SK-N-SH (cell line): ENCODE measurements at regions of chr12 and their contacts with region 1.

Region 1: GRCh38 chr12:49060237-49061156 is at the start of gene KMT2D:
- DNase-seq: peak; percentile 95
- H3K4me3 ChIP-seq: peak within 1 kb of the TSS; percentile 90 to 96
- H3K27ac ChIP-seq: peak within 1 kb of the TSS; percentile 93 to 97
- H3K4me1 ChIP-seq: peaks cover 16 to 37% of the 10 kb centered on the region in 2 experiments; a peak in 3 of 4 replicates
- H3K27me3 ChIP-seq: no peaks in the 10 kb centered on the region
- CTCF ChIP-seq: peak; percentile 44
- EP300 ChIP-seq: no peak
- RAD21 ChIP-seq: no peak
- polyA plus RNA-seq, gene KMT2D: 16.3 and 30.5 TPM in 2 replicates

Region 2: GRCh38 chr12:49049566-49050413 is 10.7 kb before region 1 on chr12:
- CTCF ChIA-PET with region 1: interaction called, 49 read pairs
- POLR2A ChIA-PET with region 1: no interaction called
- DNase-seq: no peak
- H3K4me3 ChIP-seq: no peak overlapping the region
- H3K27ac ChIP-seq: peak overlapping the region in 1 of 2 experiments; percentile 59; a peak in 2 of 4 replicates
- H3K4me1 ChIP-seq: peaks cover 0 to 7% of the 10 kb centered on the region in 2 experiments; a peak in 2 of 4 replicates
- H3K27me3 ChIP-seq: no peaks in the 10 kb centered on the region
- CTCF ChIP-seq: no peak
- EP300 ChIP-seq: no peak
- RAD21 ChIP-seq: no peak

Region 3: GRCh38 chr12:49088190-49088931 is 27.9 kb after region 1 on chr12:
- CTCF ChIA-PET with region 1: interaction called, 300 read pairs
- POLR2A ChIA-PET with region 1: interaction called, 3 read pairs
- DNase-seq: peak; percentile 86
- H3K4me3 ChIP-seq: peak overlapping the region in 1 of 2 experiments; percentile 49; a peak in 2 of 4 replicates
- H3K27ac ChIP-seq: no peak overlapping the region
- H3K4me1 ChIP-seq: peaks cover 0 to 24% of the 10 kb centered on the region in 2 experiments; a peak in 1 of 4 replicates
- H3K27me3 ChIP-seq: no peaks in the 10 kb centered on the region
- CTCF ChIP-seq: peak; percentile 87
- EP300 ChIP-seq: no peak
- RAD21 ChIP-seq: peak; percentile 79

Region 4: DNA sequence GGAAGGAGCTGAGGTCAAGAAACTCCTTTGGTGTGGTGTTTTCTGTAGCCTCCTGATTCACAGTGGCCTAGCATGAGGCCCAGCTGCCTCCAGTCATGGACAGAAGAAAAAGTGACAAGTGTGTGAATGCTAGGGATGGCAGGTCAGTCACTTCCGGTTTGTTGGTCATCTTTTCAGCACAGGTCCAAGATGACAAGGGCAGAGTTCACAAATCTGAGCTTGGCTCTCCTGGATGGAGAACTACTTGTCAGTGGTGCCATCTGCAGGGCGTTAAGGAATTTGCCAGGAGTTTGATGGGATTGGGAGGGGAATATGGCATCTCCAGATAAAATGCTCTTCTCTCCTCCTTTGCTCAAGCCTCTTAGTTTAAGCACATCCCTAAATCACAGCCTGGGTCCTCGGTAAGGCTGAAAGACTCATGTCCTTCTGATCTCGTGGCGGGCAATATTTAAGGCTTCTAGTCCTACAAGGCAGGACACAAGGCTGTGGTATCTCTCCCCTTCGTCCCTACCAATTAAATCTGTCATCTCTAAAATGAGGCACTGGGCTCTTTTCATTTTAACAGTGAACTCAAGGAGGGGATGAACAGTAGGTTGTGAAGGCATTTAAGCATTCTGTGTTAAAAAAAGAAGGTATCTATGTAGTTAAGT is 60.7 kb after region 1 on chr12:
- CTCF ChIA-PET with region 1: interaction called, 41 read pairs
- POLR2A ChIA-PET with region 1: interaction called, 4 read pairs
- DNase-seq: peak; percentile 77
- H3K4me3 ChIP-seq: no peak overlapping the region; a peak in 1 of 4 replicates
- H3K27ac ChIP-seq: no peak overlapping the region
- H3K4me1 ChIP-seq: no peaks in the 10 kb centered on the region; a peak in 1 of 4 replicates
- H3K27me3 ChIP-seq: no peaks in the 10 kb centered on the region
- CTCF ChIP-seq: peak; percentile 72
- EP300 ChIP-seq: no peak
- RAD21 ChIP-seq: peak; percentile 85

Region 5: DNA sequence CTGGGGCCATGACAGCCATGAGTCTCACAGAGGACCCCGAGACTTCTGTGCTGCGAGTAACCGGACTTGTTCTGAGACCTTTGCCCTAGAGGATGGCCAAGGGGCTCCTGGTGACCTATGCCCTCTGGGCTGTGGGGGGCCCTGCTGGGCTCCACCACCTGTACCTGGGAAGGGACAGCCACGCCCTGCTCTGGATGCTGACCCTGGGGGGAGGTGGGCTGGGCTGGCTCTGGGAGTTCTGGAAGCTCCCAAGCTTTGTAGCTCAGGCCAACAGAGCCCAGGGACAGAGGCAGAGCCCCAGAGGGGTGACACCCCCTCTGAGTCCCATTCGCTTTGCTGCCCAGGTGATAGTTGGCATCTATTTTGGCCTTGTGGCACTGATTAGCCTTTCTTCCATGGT is 288.3 kb after region 1 on chr12:
- CTCF ChIA-PET with region 1: no interaction called
- POLR2A ChIA-PET with region 1: no interaction called
- DNase-seq: no peak
- H3K4me3 ChIP-seq: no peak overlapping the region
- H3K27ac ChIP-seq: no peak overlapping the region
- H3K4me1 ChIP-seq: peaks cover 15 to 27% of the 10 kb centered on the region in 2 experiments; a peak in 2 of 4 replicates
- H3K27me3 ChIP-seq: peaks cover 5% of the 10 kb centered on the region; the same call in 1 of the 2 replicates
- CTCF ChIP-seq: no peak
- EP300 ChIP-seq: no peak
- RAD21 ChIP-seq: no peak